ENCODE measurements at regions of chr5 and their contacts with region 1.

Region 1: DNA sequence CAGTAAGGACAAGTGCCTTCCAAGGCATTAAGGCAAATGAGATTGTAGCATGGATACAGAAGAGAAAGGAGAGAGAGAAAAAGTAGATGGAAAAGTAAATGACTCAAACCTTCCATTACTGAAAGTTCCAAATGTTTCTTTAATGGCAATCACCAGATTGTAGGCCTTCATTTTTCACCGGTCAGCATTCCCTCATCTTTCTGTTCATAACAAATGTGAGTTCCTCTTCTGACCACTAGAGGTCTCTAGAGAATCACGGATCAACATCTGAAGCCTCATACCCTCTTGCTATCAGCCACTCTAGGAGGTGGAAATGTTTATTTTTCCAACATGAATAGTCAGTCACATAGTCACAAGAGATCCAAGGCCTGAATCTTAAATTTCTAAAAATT is 73.6 kb upstream of the RPS23 start:
- DNase-seq: no peak
- ATAC-seq: peak; percentile 74

Region 2: DNA sequence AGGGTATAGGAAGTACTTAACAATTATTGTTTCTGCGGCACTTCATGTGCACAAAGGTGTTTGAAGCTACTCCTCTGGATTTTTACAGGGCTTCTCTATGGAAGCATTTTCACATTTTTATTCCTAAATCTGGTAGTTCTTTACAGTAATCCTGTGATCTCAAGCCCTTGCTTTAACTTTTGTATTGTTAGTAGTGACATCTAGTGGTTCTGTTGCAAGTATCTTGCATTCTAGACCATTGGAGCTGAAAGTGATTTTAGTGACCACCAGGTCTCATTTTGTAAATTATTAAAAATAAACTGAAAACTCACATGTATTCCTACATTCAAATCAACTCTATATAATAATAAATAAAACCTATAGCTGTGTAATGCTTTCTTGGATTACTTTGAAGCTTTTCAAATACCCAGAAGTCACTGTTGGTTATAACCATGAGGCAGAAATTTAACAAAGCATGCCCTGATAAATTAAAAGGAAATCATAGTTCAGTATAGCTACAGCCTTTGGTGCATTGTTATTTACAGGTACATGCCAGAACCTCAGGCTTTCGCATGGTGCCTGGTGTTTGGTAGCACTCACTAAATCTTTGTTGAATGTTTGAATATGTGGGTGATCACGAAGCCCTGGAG is 92.5 kb before region 1 on chr5:
- intact Hi-C with region 1: no loop called
- DNase-seq: no peak
- ATAC-seq: no peak

Region 3: GRCh38 chr5:82635561-82636288 is 284.0 kb after region 1 on chr5:
- intact Hi-C with region 1: loop called (anchors 5 kb)
- DNase-seq: no peak
- ATAC-seq: no peak

Region 4: DNA sequence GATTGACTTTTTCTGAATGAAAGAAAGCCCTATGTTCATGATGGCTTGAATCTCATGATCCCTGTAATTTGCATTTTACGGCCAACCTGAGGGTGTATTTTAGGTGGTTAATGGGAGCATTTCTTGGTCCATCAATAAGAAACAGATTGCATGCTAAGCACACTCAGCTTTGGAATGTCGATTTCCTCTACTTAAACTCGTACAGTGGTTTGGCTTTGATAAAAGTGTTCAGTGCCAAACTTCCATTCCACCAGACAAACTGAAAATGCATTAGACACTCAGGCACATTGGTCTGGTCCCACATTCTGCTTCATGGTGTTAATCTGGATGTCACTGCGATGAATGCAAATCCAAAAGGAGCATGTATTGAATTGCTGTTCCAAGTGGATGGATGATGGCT is 1196.8 kb after region 1 on chr5:
- intact Hi-C with region 1: loop called (anchors 10 kb)
- DNase-seq: no peak
- ATAC-seq: no peak

Region 5: DNA sequence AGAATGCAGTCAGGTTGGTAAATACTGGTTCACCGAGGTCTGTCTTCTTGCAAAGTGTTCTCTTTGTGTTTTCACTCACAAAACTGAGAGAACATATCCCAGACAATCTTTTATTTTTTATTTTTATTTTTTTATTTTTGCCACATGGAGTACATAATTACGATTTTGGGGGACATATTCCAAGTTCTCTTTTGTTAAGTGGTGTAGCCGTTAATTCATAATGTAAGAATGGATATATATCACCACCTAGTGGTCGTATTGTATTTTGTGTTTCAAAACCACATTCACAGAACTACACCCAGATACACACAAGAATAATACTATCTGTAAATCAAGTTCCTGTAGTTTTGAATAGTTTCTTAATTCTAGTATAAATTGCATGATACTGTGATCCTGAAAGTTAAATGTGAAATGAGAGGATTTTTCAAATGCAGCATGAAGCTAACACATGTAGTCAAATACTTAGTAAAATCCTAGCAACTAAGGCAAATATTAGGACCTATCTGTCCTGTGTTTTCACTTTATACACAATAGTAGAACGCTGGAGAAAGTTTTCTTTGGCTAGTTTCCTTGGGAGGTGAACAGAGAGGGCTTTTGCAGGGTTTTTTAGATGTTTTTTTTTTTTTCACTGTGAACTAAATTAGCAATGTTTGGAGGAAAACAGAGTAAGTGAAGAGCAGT is 1212.5 kb after region 1 on chr5:
- intact Hi-C with region 1: loop called (anchors 10 kb)
- DNase-seq: no peak
- ATAC-seq: peak; percentile 64

Measured in left ventricle myocardium superior (tissue), 1 donor.